ENCODE measurements at regions of chr15 and their contacts with region 1.

Region 1: DNA sequence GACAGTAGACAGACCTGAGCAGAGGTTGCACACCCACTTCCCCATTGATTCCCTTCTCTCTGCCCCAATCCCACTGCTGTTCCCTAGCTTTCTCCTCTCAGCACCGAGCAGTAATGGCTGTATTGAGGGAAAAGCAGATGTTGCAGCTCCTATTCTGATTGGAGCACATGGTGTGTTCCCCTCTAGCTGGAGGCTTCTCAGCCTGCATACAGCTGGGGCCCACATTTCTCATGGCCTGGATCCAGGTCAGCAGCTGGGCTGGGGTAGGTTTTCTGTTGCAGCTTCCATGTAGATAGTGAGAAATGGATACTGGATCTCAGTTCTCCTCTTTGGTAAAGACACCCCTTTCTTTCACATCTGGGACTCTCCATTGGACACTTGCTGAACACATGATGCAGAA is 50.1 kb downstream of the RYR3 start:
- DNase-seq: no peak
- H3K4me3 ChIP-seq: no peak overlapping the region
- H3K27ac ChIP-seq: no peak overlapping the region
- H3K4me1 ChIP-seq: no peaks in the 10 kb centered on the region
- H3K27me3 ChIP-seq: no peaks in the 10 kb centered on the region
- CTCF ChIP-seq: no peak
- POLR2A ChIP-seq: no peak

Region 2: GRCh38 chr15:33298631-33299030 is 62.3 kb before region 1 on chr15:
- intact Hi-C with region 1: no loop called
- DNase-seq: no peak
- H3K4me3 ChIP-seq: no peak overlapping the region
- H3K27ac ChIP-seq: no peak overlapping the region
- H3K4me1 ChIP-seq: no peaks in the 10 kb centered on the region
- H3K27me3 ChIP-seq: no peaks in the 10 kb centered on the region
- CTCF ChIP-seq: no peak
- POLR2A ChIP-seq: no peak

Region 3: DNA sequence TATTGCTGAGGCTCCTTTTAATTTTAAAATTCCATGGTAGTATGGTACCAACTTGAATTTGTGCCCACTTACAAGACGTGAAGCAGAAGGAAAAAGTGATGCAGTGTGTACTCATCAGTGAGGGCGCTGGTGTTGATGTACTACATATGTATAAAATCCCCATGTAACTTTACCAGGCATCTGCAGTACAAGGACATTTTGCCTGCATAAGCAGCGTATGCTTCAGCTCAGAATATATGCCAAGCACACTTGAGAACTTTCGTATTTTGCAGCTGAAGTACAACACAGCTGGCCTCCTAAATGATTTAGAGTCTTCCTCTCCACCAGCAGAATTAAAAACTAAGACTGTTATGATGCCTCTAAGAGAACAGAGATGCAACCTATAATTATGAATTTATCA is 58.8 kb after region 1 on chr15:
- intact Hi-C with region 1: loop called (anchors 5 kb)
- DNase-seq: no peak
- H3K4me3 ChIP-seq: no peak overlapping the region
- H3K27ac ChIP-seq: no peak overlapping the region
- H3K4me1 ChIP-seq: no peaks in the 10 kb centered on the region
- H3K27me3 ChIP-seq: no peaks in the 10 kb centered on the region
- CTCF ChIP-seq: no peak
- POLR2A ChIP-seq: no peak